Activated T-helper 2 cell treated with anti-CD3 and anti-CD28 coated beads, Interferon-gamma antibody, Interleukin-2, Interleukin-4, amounts not matched to agents 10 μg/mL and 5 μg/mL and 100 μg/mL, durations not matched to agents 14 hours and 24 hours and 36 hours (primary cell): ENCODE measurements at regions of chr4 and their contacts with region 1.

Region 1: DNA sequence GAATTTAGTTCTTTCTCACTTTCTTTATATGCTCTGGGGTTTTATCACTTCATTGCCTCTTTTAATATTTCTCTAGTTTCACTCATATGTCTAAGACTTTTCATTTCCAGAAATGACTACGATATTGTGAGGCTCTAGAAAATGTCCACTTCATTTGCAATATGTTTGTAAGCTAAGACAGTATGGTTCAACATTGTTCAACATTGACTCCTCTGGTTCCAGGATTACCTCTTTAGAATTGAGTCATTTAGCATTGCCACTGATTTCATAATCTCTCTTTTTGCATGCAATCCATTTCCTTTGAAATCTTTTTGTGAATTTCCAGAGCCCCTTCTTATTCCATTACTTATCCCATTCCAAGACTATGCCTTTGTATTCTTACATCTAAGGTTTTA is 32.3 kb downstream of the BBS12 start:
- DNase-seq: no peak
- H3K4me3 Mint-ChIP-seq: no peak overlapping the region
- H3K27ac Mint-ChIP-seq: peak overlapping the region; percentile 56
- H3K4me1 Mint-ChIP-seq: peaks cover 22% of the 10 kb centered on the region
- H3K27me3 Mint-ChIP-seq: no peaks in the 10 kb centered on the region

Region 2: DNA sequence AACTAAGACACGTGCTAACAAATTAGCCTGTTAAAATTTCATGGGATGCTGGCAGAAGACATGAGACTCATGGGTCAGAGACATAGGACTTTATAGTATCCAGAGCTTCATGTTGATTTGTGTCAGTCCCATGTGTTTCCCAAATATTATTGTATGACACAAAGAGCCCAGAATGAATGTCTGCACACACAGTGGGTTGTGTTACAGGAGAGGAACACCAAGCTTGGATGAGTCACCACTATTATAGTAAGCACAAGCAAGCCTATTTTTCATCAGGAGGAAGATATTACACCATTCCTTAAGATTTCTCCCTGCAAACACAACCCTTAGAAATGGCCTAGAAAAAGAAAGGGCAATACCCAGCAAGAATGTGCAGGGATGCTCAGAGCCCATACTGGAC is 16.9 kb before region 1 on chr4:
- intact Hi-C with region 1: loop called (anchors 2 kb)
- DNase-seq: no peak
- H3K4me3 Mint-ChIP-seq: no peak overlapping the region
- H3K27ac Mint-ChIP-seq: no peak overlapping the region
- H3K4me1 Mint-ChIP-seq: peaks cover 22% of the 10 kb centered on the region
- H3K27me3 Mint-ChIP-seq: peaks cover 14% of the 10 kb centered on the region

Region 3: GRCh38 chr4:122787940-122788339 is 23.1 kb after region 1 on chr4:
- intact Hi-C with region 1: loop called (anchors 2 kb)
- DNase-seq: no peak
- H3K4me3 Mint-ChIP-seq: no peak overlapping the region
- H3K27ac Mint-ChIP-seq: no peak overlapping the region
- H3K4me1 Mint-ChIP-seq: peaks cover 26% of the 10 kb centered on the region
- H3K27me3 Mint-ChIP-seq: peaks cover 1% of the 10 kb centered on the region

Region 4: GRCh38 chr4:122814426-122814825 is 49.6 kb after region 1 on chr4:
- intact Hi-C with region 1: loop called (anchors 1 kb)
- DNase-seq: no peak
- H3K4me3 Mint-ChIP-seq: no peak overlapping the region
- H3K27ac Mint-ChIP-seq: no peak overlapping the region
- H3K4me1 Mint-ChIP-seq: peaks cover 9% of the 10 kb centered on the region
- H3K27me3 Mint-ChIP-seq: peaks cover 23% of the 10 kb centered on the region